Lower leg skin (tissue), 4 donors: ENCODE measurements at regions of chr6 and their contacts with region 1.

Region 1: GRCh38 chr6:27650620-27651370 is 177.9 kb upstream of the ZNF184 start:
- DNase-seq: no peak
- H3K4me3 ChIP-seq: no peak overlapping the region
- CTCF ChIP-seq: no peak
- POLR2A ChIP-seq: no peak

Region 2: GRCh38 chr6:27608916-27609883 is 41.6 kb before region 1 on chr6:
- intact Hi-C with region 1: loop called (anchors 1 kb)
- DNase-seq: no peak
- H3K4me3 ChIP-seq: no peak overlapping the region
- CTCF ChIP-seq: no peak
- POLR2A ChIP-seq: no peak